ENCODE measurements at regions of chr11 and their contacts with region 1.

Region 1: DNA sequence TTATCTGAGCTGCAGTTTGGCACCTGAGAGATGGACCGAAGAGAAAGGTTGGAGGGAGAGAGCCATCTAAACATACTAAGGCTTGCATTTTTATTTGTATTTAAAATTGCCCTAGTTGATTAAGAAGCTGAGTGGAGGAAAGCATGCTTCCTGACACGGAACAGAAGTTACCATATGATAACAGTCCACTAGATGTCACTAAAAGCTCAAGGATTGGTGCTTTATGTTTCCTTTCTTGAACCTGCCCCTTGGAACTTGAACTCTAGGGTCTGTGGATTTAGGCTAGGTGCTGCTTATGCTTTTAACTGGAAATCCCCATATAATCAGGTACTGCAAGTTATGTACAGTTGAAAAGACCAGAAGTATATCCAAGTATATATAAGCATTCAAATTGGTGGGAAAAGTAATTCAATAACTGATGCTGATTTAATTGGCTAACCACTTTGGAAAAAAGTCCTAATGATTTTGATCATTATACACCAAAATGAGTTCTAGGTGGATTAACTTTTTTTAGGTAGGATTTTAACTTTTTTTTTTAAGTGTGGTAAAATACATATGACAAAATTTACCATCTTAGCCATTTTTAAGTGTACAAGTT is 9.5 kb downstream of the RBMXL2 start:
- H3K4me3 Mint-ChIP-seq: no peak overlapping the region
- H3K27ac Mint-ChIP-seq: no peak overlapping the region
- H3K4me1 Mint-ChIP-seq: no peaks in the 10 kb centered on the region
- H3K27me3 Mint-ChIP-seq: peaks cover 5% of the 10 kb centered on the region

Region 2: GRCh38 chr11:6992457-6993417 is 105.6 kb before region 1 on chr11:
- intact Hi-C with region 1: no loop called
- H3K4me3 Mint-ChIP-seq: no peak overlapping the region
- H3K27ac Mint-ChIP-seq: no peak overlapping the region
- H3K4me1 Mint-ChIP-seq: peaks cover 8% of the 10 kb centered on the region
- H3K27me3 Mint-ChIP-seq: peaks cover under 1% of the 10 kb centered on the region

Region 3: GRCh38 chr11:7138051-7138450 is 39.7 kb after region 1 on chr11:
- intact Hi-C with region 1: no loop called
- H3K4me3 Mint-ChIP-seq: no peak overlapping the region
- H3K27ac Mint-ChIP-seq: no peak overlapping the region
- H3K4me1 Mint-ChIP-seq: no peaks in the 10 kb centered on the region
- H3K27me3 Mint-ChIP-seq: peaks cover 3% of the 10 kb centered on the region

Region 4: GRCh38 chr11:7442588-7443215 is 344.4 kb after region 1 on chr11:
- intact Hi-C with region 1: loop called (anchors 2 kb)
- H3K4me3 Mint-ChIP-seq: no peak overlapping the region
- H3K27ac Mint-ChIP-seq: no peak overlapping the region
- H3K4me1 Mint-ChIP-seq: peaks cover 22% of the 10 kb centered on the region
- H3K27me3 Mint-ChIP-seq: peaks cover 4% of the 10 kb centered on the region

Region 5: DNA sequence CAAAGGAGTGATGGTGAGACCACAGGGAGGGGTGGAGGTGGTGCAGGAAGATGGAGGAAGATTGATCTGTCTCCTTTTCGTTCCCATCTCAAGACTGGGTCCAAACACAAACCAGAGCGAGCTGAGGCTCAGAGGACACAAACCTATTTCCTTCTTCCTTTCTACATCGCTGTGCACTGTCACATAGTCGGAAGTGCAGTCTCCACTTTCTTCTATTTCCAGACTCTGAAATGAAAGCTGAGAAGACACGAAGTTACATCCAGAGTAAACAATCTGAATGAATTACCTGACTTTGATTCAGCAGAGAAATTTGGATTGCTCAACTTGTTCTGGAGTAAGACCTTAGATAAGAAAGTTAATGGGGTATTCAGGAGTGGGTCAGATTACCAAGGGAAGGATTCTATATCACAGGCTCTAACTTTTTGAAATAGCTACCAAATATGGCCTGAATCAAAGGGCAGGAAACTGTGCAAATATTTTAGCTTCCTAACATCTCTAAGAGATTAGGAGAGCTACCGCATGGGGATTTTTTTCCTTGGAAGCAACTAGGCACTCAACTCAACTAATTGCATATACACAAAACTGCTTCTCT is 593.5 kb after region 1 on chr11:
- intact Hi-C with region 1: loop called (anchors 1 kb)
- H3K4me3 Mint-ChIP-seq: no peak overlapping the region
- H3K27ac Mint-ChIP-seq: no peak overlapping the region
- H3K4me1 Mint-ChIP-seq: no peaks in the 10 kb centered on the region
- H3K27me3 Mint-ChIP-seq: peaks cover 48% of the 10 kb centered on the region

Region 6: DNA sequence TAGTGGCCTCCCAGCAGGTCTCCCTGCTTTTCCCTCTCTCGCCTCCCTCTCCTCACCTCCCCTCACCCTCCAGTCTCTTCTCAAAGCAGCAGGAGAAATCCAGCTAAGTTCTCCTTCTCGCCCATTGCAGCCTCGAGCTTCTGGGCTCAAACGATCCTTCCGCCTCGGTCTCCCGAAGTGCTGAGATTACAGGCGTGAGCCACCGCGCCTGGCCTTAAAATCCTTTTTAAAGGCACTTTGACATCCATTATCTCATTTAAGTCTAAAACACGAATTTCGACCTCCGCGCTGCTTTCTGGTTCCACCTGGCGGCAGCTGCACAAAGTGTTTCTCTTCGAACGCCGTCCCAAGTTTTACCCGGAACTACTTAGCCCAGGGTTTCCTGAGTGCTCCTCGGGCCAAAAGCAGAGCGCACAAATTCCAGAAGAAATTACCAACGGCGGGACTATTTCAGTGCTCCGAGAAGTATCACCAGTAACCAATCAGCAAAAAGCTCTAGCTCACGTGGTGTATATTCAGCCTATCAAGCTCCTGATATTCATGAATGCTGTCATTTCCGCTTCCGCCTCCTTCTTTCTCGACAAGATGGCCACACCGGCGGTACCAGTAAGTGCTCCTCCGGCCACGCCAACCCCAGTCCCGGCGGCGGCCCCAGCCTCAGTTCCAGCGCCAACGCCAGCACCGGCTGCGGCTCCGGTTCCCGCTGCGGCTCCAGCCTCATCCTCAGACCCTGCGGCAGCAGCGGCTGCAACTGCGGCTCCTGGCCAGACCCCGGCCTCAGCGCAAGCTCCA is 888.6 kb after region 1 on chr11 and contains the start of gene EIF3F:
- intact Hi-C with region 1: loop called (anchors 5 kb)
- H3K4me3 Mint-ChIP-seq: peak within 1 kb of the TSS; percentile 95
- H3K27ac Mint-ChIP-seq: peak within 1 kb of the TSS; percentile 83
- H3K4me1 Mint-ChIP-seq: peaks cover 39% of the 10 kb centered on the region
- H3K27me3 Mint-ChIP-seq: peaks cover 12% of the 10 kb centered on the region